ENCODE measurements at regions of chr3 and their contacts with region 1.

Region 1: DNA sequence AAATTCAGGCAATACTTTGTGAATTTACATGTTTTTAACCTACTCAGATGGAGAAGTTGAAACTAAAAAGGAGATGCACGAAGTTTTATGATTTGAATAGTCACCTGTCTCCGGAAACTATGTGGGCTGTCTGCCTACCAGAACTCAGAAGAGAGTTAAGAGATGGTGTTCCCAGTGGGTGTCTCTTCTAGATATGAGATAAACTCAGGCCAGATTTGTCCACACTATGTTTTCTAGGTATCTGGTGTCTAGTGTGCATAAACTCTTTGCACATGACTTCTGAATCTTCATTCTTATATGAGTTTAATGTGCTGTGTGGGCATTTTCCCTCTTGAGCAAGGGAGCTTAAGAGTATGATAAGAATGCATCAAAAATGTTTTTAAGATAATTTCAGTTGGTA is 222.8 kb downstream of the FOXP1 start:
- DNase-seq: peak; percentile 52
- H3K4me3 Mint-ChIP-seq: peak overlapping the region; percentile 39
- H3K27ac Mint-ChIP-seq: peak overlapping the region; percentile 89
- H3K4me1 Mint-ChIP-seq: peaks cover 76% of the 10 kb centered on the region
- H3K27me3 Mint-ChIP-seq: no peaks in the 10 kb centered on the region

Region 2: DNA sequence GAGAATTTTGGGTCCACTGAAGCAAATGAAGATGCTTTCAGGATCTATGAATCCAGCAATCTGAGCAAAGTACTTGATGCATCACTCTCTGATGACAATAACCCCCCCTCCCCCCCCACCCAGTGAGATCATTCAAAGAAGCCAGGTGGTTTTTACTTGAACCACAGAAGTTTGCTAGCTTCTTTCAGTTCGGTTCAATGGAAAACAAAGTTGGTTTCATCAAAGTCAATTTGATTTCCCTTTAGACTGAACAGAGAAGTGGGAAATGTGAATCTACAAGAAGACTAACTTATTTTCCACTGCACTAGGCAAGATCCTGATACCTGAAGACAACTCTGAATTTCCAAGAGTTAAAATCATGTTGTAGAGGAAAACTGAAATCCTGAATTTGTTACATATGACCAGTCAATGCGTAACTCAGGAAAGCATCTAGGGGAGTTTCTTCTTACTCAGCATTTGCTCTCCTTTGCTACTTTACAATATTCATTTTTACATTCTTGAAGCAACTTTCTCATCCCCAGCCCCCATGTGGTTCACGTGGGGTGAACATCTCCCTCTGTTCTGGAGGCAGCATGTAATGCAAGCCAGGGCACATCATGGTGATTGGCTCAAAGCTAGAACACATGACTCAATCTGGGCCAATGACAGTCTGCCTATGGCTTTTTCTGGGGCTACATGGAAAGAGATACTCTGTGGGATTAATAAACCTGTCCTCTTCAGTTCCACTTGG is 349.9 kb before region 1 on chr3:
- CTCF ChIA-PET with region 1: no interaction called
- POLR2A ChIA-PET with region 1: interaction called, 5 read pairs
- intact Hi-C with region 1: loop called (anchors 1 kb)
- DNase-seq: peak; percentile 87
- H3K4me3 Mint-ChIP-seq: peak overlapping the region; percentile 56
- H3K27ac Mint-ChIP-seq: peak overlapping the region; percentile 92
- H3K4me1 Mint-ChIP-seq: peaks cover 68% of the 10 kb centered on the region
- H3K27me3 Mint-ChIP-seq: no peaks in the 10 kb centered on the region

Region 3: GRCh38 chr3:71269906-71270305 is 90.9 kb before region 1 on chr3:
- CTCF ChIA-PET with region 1: no interaction called
- POLR2A ChIA-PET with region 1: no interaction called
- intact Hi-C with region 1: no loop called
- DNase-seq: no peak
- H3K4me3 Mint-ChIP-seq: no peak overlapping the region
- H3K27ac Mint-ChIP-seq: no peak overlapping the region
- H3K4me1 Mint-ChIP-seq: peaks cover 27% of the 10 kb centered on the region
- H3K27me3 Mint-ChIP-seq: no peaks in the 10 kb centered on the region

Region 4: DNA sequence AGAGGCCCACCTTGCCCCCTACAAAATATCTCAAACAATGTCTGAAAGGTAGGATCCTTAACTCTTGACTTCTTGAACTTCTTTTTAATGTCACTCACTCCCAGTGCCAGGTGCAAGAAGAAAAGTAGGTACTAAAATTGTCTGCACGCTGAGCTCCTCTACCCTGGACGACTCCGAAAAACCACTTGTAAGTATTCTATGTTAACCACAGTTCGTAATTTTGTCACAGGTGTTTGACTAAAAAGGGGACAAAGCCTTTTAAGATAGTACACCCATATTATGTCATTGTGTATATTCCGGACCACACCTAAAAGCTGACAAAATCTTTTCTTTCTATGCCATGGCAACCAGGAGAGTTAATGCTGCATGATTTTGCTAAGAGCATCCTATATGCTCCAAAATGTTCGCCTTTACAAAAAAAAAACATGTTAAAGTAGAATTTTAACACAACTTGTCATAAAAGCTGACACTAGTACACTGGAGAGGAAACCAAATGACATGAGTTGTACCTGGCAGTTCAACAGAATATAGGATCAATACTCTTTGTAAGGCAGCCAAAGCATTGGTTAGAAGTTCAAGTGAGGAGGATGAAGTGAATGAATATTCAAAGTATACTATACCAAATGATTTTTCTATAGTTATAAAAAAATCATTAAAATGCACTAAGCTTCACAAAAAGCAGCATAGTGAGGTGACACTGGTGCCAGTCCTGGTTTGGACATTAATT is 12.3 kb after region 1 on chr3:
- CTCF ChIA-PET with region 1: interaction called, 4 read pairs
- POLR2A ChIA-PET with region 1: interaction called, 10 read pairs
- intact Hi-C with region 1: loop called (anchors 1 kb)
- DNase-seq: no peak
- H3K4me3 Mint-ChIP-seq: no peak overlapping the region
- H3K27ac Mint-ChIP-seq: peak overlapping the region; percentile 28
- H3K4me1 Mint-ChIP-seq: peaks cover 59% of the 10 kb centered on the region
- H3K27me3 Mint-ChIP-seq: no peaks in the 10 kb centered on the region

Region 5: DNA sequence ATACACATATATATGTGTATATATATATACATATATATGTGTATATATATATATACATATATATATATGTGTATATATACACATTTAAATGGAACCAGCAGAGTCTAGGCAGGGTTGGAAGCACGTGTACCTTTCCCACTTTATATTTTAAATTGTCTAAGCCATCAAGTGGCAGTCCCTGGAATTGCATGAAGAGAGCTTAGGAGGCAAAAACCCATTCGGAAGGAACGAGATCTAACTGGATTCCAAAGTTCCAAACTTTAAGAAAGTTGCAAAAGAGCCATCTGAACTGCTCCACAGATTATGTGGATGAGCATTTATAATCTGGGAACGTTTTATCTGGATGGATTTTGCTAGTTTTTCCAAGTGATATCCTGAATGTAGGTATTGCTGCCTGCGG is 36.3 kb after region 1 on chr3:
- CTCF ChIA-PET with region 1: interaction called, 16 read pairs
- POLR2A ChIA-PET with region 1: interaction called, 7 read pairs
- intact Hi-C with region 1: loop called (anchors 1 kb)
- DNase-seq: no peak
- H3K4me3 Mint-ChIP-seq: no peak overlapping the region
- H3K27ac Mint-ChIP-seq: no peak overlapping the region
- H3K4me1 Mint-ChIP-seq: peaks cover 72% of the 10 kb centered on the region
- H3K27me3 Mint-ChIP-seq: peaks cover 2% of the 10 kb centered on the region

Region 6: GRCh38 chr3:71461749-71462465 is 101.1 kb after region 1 on chr3:
- CTCF ChIA-PET with region 1: no interaction called
- POLR2A ChIA-PET with region 1: no interaction called
- intact Hi-C with region 1: loop called (anchors 1 kb)
- DNase-seq: no peak
- H3K4me3 Mint-ChIP-seq: peak overlapping the region; percentile 47
- H3K27ac Mint-ChIP-seq: peak overlapping the region; percentile 94
- H3K4me1 Mint-ChIP-seq: peaks cover 67% of the 10 kb centered on the region
- H3K27me3 Mint-ChIP-seq: no peaks in the 10 kb centered on the region

Region 7: GRCh38 chr3:71542521-71543370 is 182.0 kb after region 1 on chr3:
- CTCF ChIA-PET with region 1: no interaction called
- POLR2A ChIA-PET with region 1: no interaction called
- intact Hi-C with region 1: loop called (anchors 1 kb)
- DNase-seq: no peak
- H3K4me3 Mint-ChIP-seq: no peak overlapping the region
- H3K27ac Mint-ChIP-seq: no peak overlapping the region
- H3K4me1 Mint-ChIP-seq: no peaks in the 10 kb centered on the region
- H3K27me3 Mint-ChIP-seq: no peaks in the 10 kb centered on the region

Measured in activated CD4-positive, alpha-beta memory T cell treated with anti-CD3 and anti-CD28 coated beads for 36 hours (primary cell).